ENCODE measurements at regions of chr1 and their contacts with region 1.

Region 1: DNA sequence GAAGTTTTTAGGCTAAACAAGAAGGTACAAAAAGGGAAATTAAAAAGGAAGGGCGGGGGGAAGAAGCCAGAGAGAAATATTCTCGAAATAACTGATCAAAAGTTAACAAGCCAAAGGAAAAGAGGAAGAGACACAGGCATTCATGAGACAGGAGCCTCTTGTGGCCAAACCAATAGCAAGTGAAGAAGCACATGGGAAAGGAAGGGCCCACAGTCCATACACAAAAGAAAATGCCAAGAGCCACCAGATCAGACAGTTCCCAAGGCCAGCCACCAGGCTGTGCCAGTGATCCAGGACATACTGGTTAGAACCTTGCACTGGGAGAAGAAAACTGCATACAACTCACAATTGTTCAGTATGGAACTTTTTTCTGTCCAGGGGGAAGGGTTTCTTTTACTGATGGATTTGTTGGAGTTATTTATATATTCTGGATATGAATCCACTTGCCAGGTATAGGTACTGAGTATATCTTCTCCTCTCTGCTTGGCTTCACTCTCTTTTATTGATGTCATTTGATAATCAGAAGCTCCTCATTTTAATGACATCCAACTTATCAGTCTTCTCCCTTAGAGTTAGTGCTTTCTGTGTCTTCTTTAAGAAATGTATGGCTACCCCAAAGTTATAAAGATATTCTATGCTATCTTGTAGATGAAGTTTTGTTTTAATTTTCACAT is 76.8 kb downstream of the CD46 start:
- DNase-seq: peak; percentile 91
- H3K4me3 ChIP-seq: no peak overlapping the region
- H3K27ac ChIP-seq: peak overlapping the region; percentile 91 to 99 (median 94)
- H3K4me1 ChIP-seq: peaks cover 0 to 94% (median 88%) of the 10 kb centered on the region in 4 donors
- H3K27me3 ChIP-seq: no peaks in the 10 kb centered on the region
- CTCF ChIP-seq: peak; percentile 86 to 97 (median 92)
- EP300 ChIP-seq: no peak
- POLR2A ChIP-seq: no peak

Region 2: DNA sequence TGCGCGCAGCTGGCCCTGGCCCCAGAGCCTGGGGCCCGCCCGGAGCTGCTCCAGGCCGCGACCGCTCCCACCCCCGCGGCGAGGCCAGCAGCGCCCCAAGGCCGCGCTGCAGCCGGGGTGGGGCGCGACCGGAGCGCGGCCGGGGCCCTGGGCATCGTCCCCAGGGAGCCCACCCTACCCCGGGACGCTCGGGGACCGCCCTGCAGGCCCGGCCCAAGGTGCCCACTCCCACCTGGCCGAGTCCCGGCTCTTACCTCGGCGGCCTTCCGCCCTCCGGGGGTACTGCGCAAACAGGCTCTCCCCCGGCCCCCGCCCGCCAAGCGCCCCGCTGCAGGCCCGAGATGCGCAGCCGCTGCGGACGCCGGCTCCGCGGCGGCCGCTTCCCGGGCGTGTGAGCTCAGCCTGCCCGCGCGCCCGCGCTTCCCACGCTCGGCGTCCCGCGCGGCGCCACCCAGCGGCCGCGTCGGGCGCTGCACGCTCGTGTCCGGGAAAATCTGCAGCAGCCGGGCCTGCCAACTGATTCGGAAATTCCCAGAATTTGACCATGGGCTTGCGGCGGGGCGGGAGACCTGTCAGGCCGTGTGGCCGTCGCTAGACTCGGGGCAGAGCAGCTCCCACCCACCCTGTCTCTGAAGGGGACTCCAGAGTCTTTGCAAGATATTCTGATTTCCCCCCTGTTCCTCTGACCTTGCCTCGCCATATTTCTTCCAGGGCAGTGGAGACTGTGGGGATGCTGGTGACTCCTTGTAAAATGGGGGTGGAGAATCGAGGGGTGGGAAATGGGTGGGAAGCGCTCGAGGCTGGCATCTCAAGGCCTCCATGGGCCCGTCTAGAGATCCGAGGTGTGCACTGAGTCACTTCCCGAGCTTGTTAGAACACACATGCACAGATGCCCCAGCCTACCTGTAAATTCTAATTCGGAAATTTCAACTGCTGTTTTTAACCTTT is 40.4 kb after region 1 on chr1:
- intact Hi-C with region 1: loop called (anchors 1 kb)
- DNase-seq: peak; percentile 87
- H3K4me3 ChIP-seq: peak overlapping the region; percentile 75 to 97 (median 84)
- H3K27ac ChIP-seq: peak overlapping the region; percentile 92 to 96 (median 96)
- H3K4me1 ChIP-seq: peaks cover 0 to 55% (median 49%) of the 10 kb centered on the region in 4 donors
- H3K27me3 ChIP-seq: no peaks in the 10 kb centered on the region
- CTCF ChIP-seq: peak; percentile 28 to 79 (median 48)
- EP300 ChIP-seq: no peak
- POLR2A ChIP-seq: peak in 1 of 2 donors; percentile 24

Measured in sigmoid colon (tissue), 7 donors.